Esophagus muscularis mucosa (tissue), 4 donors: ENCODE measurements at regions of chr19 and their contacts with region 1.

Region 1: DNA sequence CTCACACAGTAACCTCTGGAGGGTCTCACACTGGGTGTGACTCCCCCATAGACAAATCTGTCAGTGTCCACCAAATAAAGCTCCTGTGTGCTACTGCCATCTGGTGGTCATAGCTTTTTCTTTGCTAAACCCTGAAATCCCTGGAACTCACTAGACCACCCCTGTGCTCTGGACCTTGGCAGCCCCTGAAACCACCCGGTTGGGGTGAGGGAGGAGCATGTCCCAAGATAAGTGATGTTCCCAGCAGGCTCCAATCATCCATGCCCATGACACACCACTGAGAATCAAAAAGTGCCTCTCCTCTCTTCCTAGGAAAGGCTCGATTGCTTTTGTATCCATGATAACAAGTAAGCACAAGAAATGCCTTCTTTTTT is 6.5 kb upstream of the HSD17B14 start:
- DNase-seq: no peak
- H3K4me3 ChIP-seq: no peak overlapping the region
- H3K27ac ChIP-seq: no peak overlapping the region
- H3K4me1 ChIP-seq: no peaks in the 10 kb centered on the region
- H3K27me3 ChIP-seq: no peaks in the 10 kb centered on the region
- CTCF ChIP-seq: peak; percentile 75 to 79 (median 77)
- EP300 ChIP-seq: no peak
- POLR2A ChIP-seq: no peak

Region 2: DNA sequence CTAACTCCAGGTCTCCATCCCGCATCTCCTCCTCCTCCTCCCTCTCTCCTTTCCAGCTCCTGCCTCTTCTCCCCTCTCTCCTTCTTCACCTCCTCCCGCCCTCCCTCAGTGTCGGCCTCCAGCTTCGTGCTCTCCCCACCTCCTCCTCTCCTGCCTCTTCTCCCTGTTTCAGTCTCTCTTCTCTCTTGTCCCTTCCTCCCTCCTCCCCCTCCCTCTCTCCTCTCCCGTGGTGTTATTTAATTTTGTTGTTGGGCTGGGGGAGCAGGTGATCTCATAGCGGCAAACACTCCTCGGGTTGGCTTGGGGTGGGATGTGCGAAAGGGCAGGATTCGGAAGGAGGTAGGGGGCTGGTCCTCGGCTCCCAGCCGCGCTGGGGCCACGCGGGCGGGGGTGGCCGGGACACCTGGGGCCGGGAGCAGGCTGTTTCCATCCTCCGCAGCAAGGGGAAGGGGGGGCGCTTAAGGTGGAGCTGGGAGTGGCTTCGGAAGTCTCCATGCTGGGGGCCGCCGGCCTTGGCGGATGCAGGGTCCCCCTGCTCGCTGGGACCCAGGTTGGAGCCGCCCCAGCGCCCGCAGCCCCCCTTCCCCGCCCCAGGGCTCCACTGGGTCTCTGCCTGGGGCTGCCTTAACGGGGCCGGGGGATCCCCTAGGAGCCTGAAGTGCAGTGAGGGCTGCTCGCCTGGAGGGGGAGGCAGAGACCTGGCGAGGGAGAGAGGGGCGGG is 196.6 kb before region 1 on chr19 and contains the start of gene CA11:
- intact Hi-C with region 1: loop called (anchors 10 kb)
- DNase-seq: no peak
- H3K4me3 ChIP-seq: peak within 1 kb of the TSS; percentile 63 to 73 (median 67)
- H3K27ac ChIP-seq: peak within 1 kb of the TSS; percentile 89 to 94 (median 91)
- H3K4me1 ChIP-seq: peaks cover 17 to 29% (median 26%) of the 10 kb centered on the region in 4 donors
- H3K27me3 ChIP-seq: no peaks in the 10 kb centered on the region
- CTCF ChIP-seq: peak; percentile 92 to 98 (median 96)
- EP300 ChIP-seq: no peak
- POLR2A ChIP-seq: no peak
- total RNA-seq, gene CA11: 11.9 to 16.5 (median 14.9) TPM

Region 3: GRCh38 chr19:48806518-48806817 is 36.3 kb before region 1 on chr19:
- intact Hi-C with region 1: no loop called
- DNase-seq: no peak
- H3K4me3 ChIP-seq: no peak overlapping the region
- H3K27ac ChIP-seq: no peak overlapping the region
- H3K4me1 ChIP-seq: peaks cover 9 to 44% (median 36%) of the 10 kb centered on the region in 4 donors
- H3K27me3 ChIP-seq: no peaks in the 10 kb centered on the region
- CTCF ChIP-seq: no peak
- EP300 ChIP-seq: no peak
- POLR2A ChIP-seq: no peak